Activated naive CD4-positive, alpha-beta T cell treated with anti-CD3 and anti-CD28 coated beads for 36 hours (primary cell): ENCODE measurements at regions of chr16 and their contacts with region 1.

Region 1: GRCh38 chr16:29973384-29974246 is at the start of gene TAOK2:
- DNase-seq: peak; percentile 95
- H3K4me3 Mint-ChIP-seq: peak within 1 kb of the TSS; percentile 97
- H3K27ac Mint-ChIP-seq: peak within 1 kb of the TSS; percentile 82
- H3K4me1 Mint-ChIP-seq: peaks cover 28% of the 10 kb centered on the region
- H3K27me3 Mint-ChIP-seq: no peaks in the 10 kb centered on the region
- total RNA-seq, gene TAOK2: 20.9 to 21.6 TPM

Region 2: DNA sequence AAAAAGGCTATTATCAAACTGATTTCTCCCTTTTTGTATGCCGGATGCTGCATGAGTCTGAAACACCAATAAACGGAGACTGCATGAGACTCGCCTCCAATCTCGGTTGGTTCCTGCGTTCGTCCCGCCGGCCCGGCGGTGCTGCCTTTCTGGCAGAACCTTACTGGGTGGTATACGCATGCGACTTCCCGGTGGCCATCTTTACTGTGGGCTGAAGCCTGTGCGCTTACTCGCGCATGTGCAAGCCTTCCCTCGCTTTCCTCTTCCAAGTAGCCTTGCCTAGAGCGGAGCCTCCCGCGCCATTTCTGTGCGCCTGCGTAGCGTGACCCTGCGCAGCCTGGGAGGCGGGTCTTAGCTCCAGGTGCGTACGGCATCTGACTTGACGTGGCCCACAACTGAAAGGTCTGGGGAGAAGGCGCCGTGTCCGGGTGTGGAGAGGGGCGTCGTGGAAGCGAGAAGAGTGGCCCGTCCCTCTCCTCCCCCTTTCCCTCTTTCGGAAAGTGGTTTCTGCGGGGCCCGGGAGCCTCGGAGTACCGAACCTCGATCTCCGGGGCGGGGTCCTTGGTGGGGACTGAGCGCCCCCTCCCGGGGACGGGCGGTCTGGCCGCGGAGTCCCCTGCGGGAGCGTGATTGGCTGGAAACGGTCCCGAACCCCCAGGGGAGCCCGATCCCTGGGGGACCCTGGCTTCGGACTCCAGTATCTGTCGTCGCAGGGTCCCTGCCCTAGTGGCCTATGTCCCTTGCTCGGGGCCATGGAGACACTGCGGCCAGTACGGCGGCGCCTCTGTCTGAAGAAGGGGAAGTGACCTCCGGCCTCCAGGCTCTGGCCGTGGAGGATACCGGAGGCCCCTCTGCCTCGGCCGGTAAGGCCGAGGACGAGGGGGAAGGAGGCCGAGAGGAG is 157.6 kb before region 1 on chr16 and contains the start of gene PAGR1:
- CTCF ChIA-PET with region 1: interaction called, 3 read pairs
- intact Hi-C with region 1: loop called (anchors 5 kb)
- DNase-seq: peak; percentile 99
- H3K4me3 Mint-ChIP-seq: peak within 1 kb of the TSS; percentile 93
- H3K27ac Mint-ChIP-seq: peak within 1 kb of the TSS; percentile 96
- H3K4me1 Mint-ChIP-seq: peaks cover 55% of the 10 kb centered on the region
- H3K27me3 Mint-ChIP-seq: no peaks in the 10 kb centered on the region
- total RNA-seq, gene PAGR1: 16.9 to 19.3 TPM

Region 3: DNA sequence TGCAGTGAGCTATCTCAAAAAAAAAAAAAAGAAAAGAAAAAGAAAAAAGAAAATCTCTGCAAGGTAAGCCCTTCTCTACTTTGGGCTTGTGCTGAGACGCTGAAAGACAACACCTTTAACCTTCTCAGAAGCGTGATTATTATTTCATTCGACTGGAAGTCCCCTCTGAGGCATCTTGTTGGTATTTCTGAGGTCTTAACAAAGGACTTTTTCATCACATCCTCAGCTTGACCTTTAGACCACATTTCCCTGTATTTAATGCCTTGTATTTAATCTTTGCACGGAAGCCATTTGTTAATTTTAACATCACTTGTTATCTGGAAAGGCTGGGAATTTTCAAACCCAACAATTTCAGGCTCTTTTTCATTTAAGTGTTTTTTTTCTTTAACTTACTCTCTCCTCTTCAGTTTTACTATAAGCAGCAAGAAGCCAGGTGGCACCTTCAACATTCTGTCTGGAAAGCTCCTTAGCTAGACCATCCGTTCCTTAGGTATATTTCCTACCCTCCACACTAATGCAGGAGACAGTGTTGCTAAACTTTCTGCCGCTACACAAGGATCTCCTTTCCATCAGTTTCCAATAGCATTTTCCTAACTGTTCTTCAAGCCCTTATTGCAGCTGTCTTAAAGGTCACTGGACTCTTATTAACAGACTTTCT is 57.9 kb before region 1 on chr16:
- CTCF ChIA-PET with region 1: no interaction called
- intact Hi-C with region 1: no loop called
- DNase-seq: no peak
- H3K4me3 Mint-ChIP-seq: no peak overlapping the region
- H3K27ac Mint-ChIP-seq: peak overlapping the region; percentile 46
- H3K4me1 Mint-ChIP-seq: peaks cover 10% of the 10 kb centered on the region
- H3K27me3 Mint-ChIP-seq: no peaks in the 10 kb centered on the region

Region 4: DNA sequence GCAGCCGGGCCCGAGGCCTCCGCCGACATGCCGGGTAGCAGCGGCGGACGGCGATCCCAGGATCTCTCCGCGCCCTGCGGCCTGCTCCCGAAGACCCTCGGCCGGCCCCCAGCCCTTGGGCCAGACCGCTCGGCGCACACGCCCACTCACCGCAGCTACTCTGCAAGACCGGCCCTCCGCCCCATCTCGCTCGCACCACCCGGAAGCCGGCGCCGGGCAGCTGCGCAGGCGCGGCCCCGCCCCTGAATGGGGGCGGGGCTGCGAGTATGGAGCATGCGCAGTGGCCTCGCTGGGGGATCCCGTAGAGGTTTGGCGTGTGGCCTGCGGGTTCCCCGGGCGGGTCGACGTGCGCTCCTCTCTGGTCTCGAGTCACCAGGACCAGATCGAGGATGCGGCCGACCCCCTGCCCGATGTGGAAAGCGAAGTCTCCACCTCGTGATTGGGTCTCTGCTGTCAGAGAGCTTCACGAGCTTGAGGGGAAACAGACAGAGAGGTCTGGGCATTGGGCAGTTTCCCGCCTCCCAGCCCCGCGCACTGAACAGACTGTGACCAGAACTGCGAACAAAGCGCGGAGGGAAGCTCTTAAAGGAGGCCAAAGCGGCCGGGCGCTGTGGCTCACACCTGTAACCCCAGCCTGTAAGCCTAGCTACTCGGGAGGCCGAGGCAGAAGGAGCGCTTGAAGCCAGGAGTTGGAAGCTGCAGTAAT is 47.5 kb before region 1 on chr16 and contains the start of gene KCTD13:
- CTCF ChIA-PET with region 1: no interaction called
- intact Hi-C with region 1: loop called (anchors 1 kb)
- DNase-seq: peak; percentile 86
- H3K4me3 Mint-ChIP-seq: peak within 1 kb of the TSS; percentile 91
- H3K27ac Mint-ChIP-seq: peak within 1 kb of the TSS; percentile 88
- H3K4me1 Mint-ChIP-seq: peaks cover 32% of the 10 kb centered on the region
- H3K27me3 Mint-ChIP-seq: no peaks in the 10 kb centered on the region
- total RNA-seq, gene KCTD13: 25.8 to 29.4 TPM

Region 5: DNA sequence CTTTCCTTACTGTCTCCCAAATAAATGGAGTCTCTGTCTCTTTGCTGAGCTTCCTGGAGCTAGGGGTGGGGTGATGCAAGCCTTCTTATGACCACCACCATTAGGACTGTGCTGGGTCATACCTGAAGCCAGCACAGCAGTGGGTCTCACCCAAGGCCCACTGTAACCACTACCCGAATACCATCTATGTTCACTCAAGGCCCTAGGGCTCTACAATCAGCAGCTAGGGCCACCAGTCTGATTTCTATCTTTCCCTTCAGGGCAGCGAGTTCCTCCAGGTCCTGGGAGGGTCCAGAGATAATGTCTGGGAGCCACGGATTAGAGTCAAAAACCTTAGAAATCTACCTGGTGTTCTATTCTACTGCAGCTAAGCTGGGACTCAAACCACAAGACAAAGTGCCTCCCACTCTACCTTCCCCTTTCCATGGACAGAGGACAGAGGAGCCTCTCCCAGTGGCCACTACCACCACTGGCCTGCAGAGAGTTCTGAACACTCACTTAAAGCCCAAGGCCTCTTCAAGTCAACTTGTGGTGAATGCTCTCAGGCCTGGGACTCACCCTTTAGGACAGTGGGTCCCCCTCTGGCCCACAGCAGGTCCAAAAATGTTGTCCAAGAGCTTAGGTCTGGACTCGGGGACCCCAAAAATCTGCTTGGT is 22.7 kb before region 1 on chr16:
- CTCF ChIA-PET with region 1: no interaction called
- intact Hi-C with region 1: no loop called
- DNase-seq: no peak
- H3K4me3 Mint-ChIP-seq: no peak overlapping the region
- H3K27ac Mint-ChIP-seq: no peak overlapping the region
- H3K4me1 Mint-ChIP-seq: no peaks in the 10 kb centered on the region
- H3K27me3 Mint-ChIP-seq: no peaks in the 10 kb centered on the region

Region 6: DNA sequence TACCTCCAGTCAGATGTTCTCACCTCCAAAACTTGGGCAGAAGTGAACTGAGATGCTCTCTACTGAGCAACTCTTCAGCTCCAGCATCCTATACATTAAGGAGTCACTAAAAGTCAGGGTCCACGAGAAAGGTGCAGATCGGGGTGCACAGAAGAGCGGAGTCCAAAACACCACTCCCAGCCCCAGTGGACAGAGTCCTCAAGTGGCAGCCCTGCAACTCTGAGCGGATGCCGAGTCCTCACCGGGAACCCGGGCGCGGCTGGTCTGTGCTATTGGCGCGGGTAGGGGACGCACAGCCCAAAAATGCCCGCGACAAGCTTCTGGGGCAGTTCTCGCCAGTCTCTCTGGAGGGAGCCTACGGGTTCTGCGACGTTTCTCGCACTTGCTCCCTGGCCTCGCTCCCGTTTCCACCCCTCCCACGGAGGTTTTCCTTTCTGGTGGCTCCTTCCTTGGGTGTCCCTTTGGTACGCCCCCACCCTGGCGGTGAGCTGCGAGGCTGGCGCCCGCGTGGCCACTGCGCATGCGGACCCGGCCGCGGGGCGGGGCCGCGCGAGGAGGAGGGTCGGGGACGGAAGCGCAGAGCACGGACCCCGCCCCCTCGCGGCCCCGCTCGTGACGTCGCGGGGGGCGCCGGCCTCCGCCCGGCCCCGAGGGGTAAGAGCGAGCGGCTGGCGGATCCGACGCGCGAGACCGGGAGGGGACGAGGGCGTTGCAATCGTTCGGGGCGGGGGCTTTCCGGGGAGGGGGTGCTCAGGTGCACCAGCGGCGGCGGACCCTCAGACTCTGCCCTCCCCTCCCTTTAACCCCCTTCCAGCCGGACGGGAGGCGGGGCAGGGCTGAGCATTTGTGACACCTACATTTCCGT is 11.9 kb before region 1 on chr16 and contains the start of gene TMEM219:
- CTCF ChIA-PET with region 1: interaction called, 20 read pairs
- intact Hi-C with region 1: no loop called
- DNase-seq: peak; percentile 88
- H3K4me3 Mint-ChIP-seq: peak within 1 kb of the TSS; percentile 87
- H3K27ac Mint-ChIP-seq: peak within 1 kb of the TSS; percentile 83
- H3K4me1 Mint-ChIP-seq: peaks cover 20% of the 10 kb centered on the region
- H3K27me3 Mint-ChIP-seq: no peaks in the 10 kb centered on the region
- total RNA-seq, gene TMEM219: 31.9 to 35.5 TPM

Region 7: DNA sequence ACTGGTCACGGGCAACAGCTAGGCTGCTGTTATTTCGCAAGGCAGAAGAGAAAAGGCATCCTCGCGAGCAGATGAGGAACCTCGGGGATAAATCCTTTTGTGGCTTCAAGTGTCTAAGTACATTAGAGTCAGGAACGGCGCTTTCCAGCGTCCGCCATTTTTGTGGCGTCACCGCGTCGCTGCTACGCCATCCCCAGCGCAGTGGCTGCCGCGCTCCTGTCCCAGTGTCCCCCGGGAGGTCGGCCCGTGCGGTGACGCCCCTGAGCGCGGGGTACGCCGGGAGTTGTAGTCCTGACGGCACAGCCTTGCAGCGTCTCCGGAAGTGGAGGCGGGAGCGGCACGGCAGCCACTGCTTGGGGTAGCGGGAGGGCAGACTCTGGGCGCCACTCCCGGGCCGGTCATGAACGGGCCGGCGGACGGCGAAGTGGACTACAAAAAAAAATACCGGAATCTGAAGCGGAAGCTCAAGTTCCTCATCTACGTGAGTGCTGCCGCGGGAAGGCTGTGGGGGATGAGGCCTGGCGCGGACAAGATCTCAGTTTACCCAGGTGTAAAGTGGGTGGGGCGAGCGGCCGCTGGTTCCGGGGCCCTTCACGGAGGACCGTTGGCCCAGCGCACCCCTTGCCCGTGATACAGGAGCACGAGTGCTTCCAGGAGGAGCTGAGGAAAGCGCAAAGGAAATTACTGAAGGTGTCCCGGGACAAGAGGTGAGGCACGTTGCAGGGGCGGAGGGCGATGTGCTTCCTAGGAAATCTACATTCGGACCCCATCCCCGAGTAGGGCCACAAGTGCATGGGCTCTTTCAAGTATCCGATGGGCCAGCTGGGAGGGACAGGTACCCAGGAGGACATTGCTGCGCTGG is 22.5 kb after region 1 on chr16 and contains the start of gene INO80E:
- CTCF ChIA-PET with region 1: no interaction called
- intact Hi-C with region 1: loop called (anchors 1 kb)
- DNase-seq: peak; percentile 100
- H3K4me3 Mint-ChIP-seq: peak within 1 kb of the TSS; percentile 98
- H3K27ac Mint-ChIP-seq: peak within 1 kb of the TSS; percentile 98
- H3K4me1 Mint-ChIP-seq: peaks cover 32% of the 10 kb centered on the region
- H3K27me3 Mint-ChIP-seq: no peaks in the 10 kb centered on the region
- total RNA-seq, gene INO80E: 62.0 to 65.4 TPM

Region 8: GRCh38 chr16:30005341-30006094 is 31.9 kb after region 1 on chr16:
- CTCF ChIA-PET with region 1: interaction called, 3 read pairs
- intact Hi-C with region 1: loop called (anchors 5 kb)
- DNase-seq: peak; percentile 49
- H3K4me3 Mint-ChIP-seq: no peak overlapping the region
- H3K27ac Mint-ChIP-seq: no peak overlapping the region
- H3K4me1 Mint-ChIP-seq: peaks cover 3% of the 10 kb centered on the region
- H3K27me3 Mint-ChIP-seq: peaks cover 11% of the 10 kb centered on the region

Region 9: DNA sequence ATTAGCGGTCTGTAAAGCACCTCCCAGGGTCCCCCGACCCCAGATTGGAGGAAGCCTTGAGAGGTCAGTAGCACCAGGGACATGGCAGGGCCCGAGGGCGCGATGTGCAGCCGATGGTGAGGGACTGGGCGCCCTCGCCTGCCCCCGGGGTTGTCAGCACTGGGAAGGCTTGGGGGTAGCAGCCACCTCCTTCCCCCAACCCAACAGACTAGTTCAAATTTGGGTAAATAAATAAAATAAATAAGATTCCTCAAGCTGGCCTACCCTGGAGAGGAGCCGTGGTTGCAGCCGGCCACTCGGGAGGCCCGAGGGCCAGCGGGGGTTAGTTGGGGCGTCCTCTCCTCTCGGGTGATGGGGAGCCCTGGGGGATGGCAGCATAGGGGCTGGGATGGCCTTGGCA is 50.8 kb after region 1 on chr16:
- CTCF ChIA-PET with region 1: no interaction called
- intact Hi-C with region 1: loop called (anchors 5 kb)
- DNase-seq: no peak
- H3K4me3 Mint-ChIP-seq: no peak overlapping the region
- H3K27ac Mint-ChIP-seq: no peak overlapping the region
- H3K4me1 Mint-ChIP-seq: peaks cover 5% of the 10 kb centered on the region
- H3K27me3 Mint-ChIP-seq: peaks cover 23% of the 10 kb centered on the region